ENCODE measurements at regions of chr5 and their contacts with region 1.

Region 1: GRCh38 chr5:141557681-141558136 is 61.1 kb downstream of the DIAPH1 start:
- DNase-seq: peak; percentile 82 to 89
- H3K4me3 ChIP-seq: peak overlapping the region in 1 of 4 experiments; percentile 25; a peak in 2 of 8 replicates
- H3K27ac ChIP-seq: peak overlapping the region; percentile 90
- H3K4me1 ChIP-seq: peaks cover 3 to 18% (median 6%) of the 10 kb centered on the region in 4 experiments; a peak in 6 of 7 replicates
- H3K27me3 ChIP-seq: no peaks in the 10 kb centered on the region
- CTCF ChIP-seq: peak; percentile 65 to 85 (median 81)
- EP300 ChIP-seq: peak in 1 of 2 experiments; percentile 54; a peak in 1 of 3 replicates
- POLR2A ChIP-seq: peak; percentile 44 to 60
- RAD21 ChIP-seq: peak; percentile 84 to 87

Region 2: DNA sequence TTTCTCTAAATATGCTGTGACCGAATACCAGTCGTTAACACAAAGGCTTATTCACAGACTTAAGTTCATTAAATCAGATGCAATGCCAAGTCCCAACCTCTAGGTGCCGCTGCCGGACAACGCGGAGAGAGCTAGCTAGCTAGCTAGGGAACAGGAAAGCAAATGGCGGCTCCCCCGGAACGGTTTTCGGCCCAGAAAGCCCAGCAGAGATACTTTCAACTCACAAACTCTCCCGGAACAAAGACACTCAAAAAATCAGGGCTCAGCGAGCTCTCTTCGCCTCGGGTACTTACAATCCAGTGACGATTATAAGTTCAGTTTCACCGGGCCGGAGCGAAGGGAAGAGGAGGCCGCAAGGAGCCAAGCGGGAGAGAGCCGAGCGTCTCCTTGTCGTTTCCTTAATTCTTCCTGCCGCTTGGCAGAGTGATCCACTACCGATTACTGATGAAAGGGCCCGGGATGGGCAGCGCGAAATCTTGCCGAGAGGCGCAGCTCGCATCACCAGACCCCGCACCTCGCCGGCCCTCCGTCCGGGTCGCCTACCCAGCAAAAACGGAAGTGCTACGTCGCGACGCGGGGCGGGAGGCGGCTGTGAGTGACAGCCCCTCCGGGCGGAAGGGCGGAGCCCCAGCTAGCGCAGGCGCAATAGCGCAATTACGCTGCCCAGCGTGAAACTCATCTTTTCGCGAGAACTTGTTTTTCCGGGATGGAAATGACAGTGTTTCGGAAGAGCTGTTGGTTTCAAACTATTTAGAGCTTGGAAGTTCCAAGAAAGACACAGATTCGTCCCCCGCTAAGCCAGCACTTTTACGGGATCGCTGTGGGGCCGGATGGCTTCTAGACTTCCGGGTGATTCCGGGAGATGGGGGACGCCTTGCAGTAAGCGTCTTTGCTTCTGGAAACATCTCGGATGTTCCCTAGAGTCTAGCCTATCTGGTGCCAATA is 237.2 kb before region 1 on chr5 and contains the start of gene TAF7:
- CTCF ChIA-PET with region 1: interaction called, 16 read pairs
- POLR2A ChIA-PET with region 1: no interaction called
- DNase-seq: peak; percentile 77 to 95
- H3K4me3 ChIP-seq: peak within 1 kb of the TSS; percentile 79 to 99 (median 92)
- H3K27ac ChIP-seq: peak within 1 kb of the TSS; percentile 95
- H3K4me1 ChIP-seq: no peaks in the 10 kb centered on the region
- H3K27me3 ChIP-seq: no peaks in the 10 kb centered on the region
- CTCF ChIP-seq: peak; percentile 77 to 93 (median 80)
- EP300 ChIP-seq: no peak
- POLR2A ChIP-seq: peak; percentile 95 to 98
- RAD21 ChIP-seq: peak; percentile 45 to 57
- total RNA-seq, gene TAF7: 99.4 and 101 TPM in 2 replicates

Region 3: DNA sequence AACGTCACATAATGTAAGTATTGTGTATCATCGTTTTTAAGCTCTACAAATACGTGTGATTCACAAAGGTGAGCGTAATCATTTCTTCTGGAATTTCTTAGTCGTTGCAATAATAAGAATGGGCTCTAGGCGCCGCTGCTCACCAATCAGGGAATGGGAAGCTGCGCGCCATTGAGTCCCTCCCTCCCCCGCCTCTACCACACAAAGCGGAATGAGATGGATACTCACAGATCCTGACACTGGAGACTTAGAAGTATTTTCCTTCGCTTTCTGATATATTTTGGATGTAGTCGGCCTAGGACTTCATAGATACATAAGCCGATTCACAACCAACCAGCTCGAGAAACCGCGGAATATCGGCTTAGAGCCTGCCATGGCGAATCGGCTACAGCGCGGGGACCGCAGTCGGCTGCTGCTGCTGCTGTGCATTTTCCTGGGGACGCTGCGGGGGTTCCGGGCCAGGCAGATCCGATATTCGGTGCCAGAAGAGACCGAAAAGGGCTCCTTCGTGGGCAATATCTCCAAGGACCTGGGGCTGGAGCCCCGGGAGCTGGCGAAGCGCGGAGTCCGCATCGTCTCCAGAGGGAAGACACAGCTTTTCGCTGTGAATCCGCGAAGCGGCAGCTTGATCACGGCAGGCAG is 136.7 kb before region 1 on chr5 and contains the start of gene PCDHGA11:
- CTCF ChIA-PET with region 1: interaction called, 34 read pairs
- POLR2A ChIA-PET with region 1: interaction called, 7 read pairs
- DNase-seq: peak in 1 of 2 experiments; percentile 91
- H3K4me3 ChIP-seq: peak within 1 kb of the TSS; percentile 15 to 52 (median 32); a peak in 6 of 8 replicates
- H3K27ac ChIP-seq: no peak within 1 kb of the TSS
- H3K4me1 ChIP-seq: no peaks in the 10 kb centered on the region; a peak in 1 of 7 replicates
- H3K27me3 ChIP-seq: peaks cover 0 to 12% (median 6%) of the 10 kb centered on the region in 4 experiments; a peak in 4 of 7 replicates
- CTCF ChIP-seq: peak; percentile 59 to 77 (median 75)
- EP300 ChIP-seq: no peak
- POLR2A ChIP-seq: no peak
- RAD21 ChIP-seq: peak; percentile 88 to 90
- total RNA-seq, gene PCDHGA11: 8.2 and 8.3 TPM in 2 replicates

Region 4: DNA sequence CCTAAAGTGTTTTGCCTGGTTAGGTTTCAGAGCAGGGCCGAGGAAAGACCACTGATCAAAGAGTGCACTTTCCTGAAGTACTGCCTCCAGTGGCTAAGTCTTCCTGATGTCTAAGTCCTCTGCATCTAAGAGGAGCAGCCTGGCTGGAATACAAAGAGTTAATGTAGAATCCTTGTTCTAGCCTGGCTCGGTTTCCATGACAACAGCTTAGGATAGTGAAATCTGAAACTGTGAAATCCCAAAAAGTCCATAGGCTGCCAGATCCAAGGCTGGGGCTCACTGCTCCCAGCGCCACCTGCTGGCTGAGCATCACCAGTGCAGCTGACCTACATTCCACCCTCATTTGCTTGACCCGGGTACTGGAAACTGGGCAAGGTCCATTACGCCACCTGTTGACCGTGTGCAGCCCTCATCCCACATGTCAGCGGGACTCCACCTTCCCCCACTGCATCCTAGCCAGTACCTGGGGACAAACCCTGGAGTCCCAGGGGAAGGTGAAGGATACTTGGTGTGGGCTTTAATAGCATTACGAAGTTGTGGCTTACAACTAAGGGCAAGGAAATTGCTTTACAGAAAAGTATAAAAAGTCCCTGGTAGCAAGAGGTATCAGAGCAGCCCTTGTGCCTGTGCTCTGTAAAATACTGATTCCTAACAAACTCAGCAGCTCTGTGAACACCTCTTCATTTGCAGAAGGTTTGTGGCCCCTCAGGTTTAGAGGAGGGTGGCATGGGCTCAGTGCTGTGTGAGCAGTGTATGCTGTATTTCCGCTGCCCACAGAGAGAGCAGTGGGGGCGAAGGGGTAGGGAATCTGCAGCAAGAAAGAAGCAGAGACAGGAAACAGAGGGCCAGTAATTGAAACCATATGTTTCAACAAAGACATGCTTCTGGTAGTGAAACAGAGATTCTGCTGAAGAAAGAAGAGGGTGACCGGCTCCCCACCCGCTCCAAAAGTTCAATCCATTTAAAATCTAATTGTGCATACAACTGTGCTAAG is 32.8 kb before region 1 on chr5:
- CTCF ChIA-PET with region 1: interaction called, 41 read pairs
- POLR2A ChIA-PET with region 1: interaction called, 6 read pairs
- DNase-seq: peak; percentile 90 to 95
- H3K4me3 ChIP-seq: no peak overlapping the region
- H3K27ac ChIP-seq: peak overlapping the region; percentile 26; the same call in 1 of the 2 replicates
- H3K4me1 ChIP-seq: peaks cover 2 to 15% (median 8%) of the 10 kb centered on the region in 4 experiments; a peak in 6 of 7 replicates
- H3K27me3 ChIP-seq: no peaks in the 10 kb centered on the region
- CTCF ChIP-seq: peak; percentile 99 to 100 (median 99)
- EP300 ChIP-seq: peak in 1 of 2 experiments; percentile 68; a peak in 1 of 3 replicates
- POLR2A ChIP-seq: no peak
- RAD21 ChIP-seq: peak; percentile 90 to 91

Region 5: DNA sequence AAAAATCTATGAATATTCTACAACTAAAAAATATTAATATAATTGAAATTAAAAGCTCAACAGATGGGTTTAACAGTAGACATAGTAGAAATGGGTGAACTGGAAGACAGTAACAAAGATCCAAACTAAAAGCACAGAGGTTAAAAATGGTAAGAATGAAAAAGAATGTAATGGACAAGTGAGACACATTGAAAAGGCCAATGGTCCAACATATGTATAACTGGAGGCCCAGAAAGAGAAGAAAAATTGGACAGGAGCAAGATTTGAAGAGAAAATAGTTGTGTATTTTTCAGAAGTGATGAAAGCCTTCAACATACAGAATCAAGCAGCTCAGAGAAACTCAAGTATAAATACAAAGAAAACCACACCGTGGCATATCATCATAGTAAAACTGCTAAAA is 10.2 kb before region 1 on chr5:
- CTCF ChIA-PET with region 1: interaction called, 11 read pairs
- POLR2A ChIA-PET with region 1: interaction called, 3 read pairs
- DNase-seq: no peak
- H3K4me3 ChIP-seq: no peak overlapping the region; a peak in 1 of 8 replicates
- H3K27ac ChIP-seq: no peak overlapping the region
- H3K4me1 ChIP-seq: no peaks in the 10 kb centered on the region
- H3K27me3 ChIP-seq: no peaks in the 10 kb centered on the region
- CTCF ChIP-seq: no peak
- EP300 ChIP-seq: no peak
- POLR2A ChIP-seq: no peak
- RAD21 ChIP-seq: no peak

Region 6: DNA sequence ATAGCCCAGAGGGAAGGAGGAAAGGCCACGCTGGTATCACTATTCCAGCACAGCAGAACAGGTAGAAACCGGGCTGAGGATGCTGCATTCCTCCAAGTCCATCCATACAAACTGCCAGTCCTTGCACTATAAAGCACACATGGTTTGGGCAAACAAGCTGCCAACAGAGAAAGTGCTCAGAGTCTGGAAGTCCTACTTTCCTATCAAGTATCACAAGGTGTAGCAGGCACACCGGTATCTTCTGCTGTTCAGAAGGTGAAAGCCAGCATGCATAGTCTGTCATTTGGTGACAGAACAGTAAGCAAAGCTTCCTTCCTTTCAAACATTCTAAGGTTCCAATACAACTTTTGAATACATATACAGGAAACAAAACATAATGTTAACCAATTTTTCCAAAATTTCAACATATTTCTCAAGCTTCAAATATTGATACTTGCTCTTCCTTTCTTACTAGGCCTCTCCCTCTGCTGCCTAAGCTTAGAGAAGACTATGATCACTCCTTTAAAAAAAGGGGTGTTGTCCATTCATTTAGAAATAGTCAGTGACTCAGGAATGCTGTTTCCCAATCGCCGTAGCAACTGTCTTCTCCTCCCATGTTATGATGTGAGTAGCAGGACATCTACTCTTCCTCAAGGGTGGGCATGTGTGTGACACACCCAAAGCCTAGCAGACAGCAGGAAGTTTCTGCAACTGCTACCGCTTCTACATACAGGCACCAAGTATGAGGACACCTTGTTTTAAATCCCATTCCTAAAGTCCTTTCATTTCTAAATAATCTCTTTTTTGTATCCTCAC is 46.4 kb after region 1 on chr5:
- CTCF ChIA-PET with region 1: no interaction called
- POLR2A ChIA-PET with region 1: no interaction called
- DNase-seq: no peak
- H3K4me3 ChIP-seq: no peak overlapping the region
- H3K27ac ChIP-seq: no peak overlapping the region
- H3K4me1 ChIP-seq: no peaks in the 10 kb centered on the region; a peak in 1 of 7 replicates
- H3K27me3 ChIP-seq: no peaks in the 10 kb centered on the region
- CTCF ChIP-seq: no peak
- EP300 ChIP-seq: no peak
- POLR2A ChIP-seq: no peak
- RAD21 ChIP-seq: no peak

Measured in H1 (cell line).